ENCODE measurements at regions of chr6 and their contacts with region 1.

Region 1: GRCh38 chr6:84428300-84428907 is 201.0 kb upstream of the CEP162 start:
- DNase-seq: peak; percentile 66
- H3K4me3 Mint-ChIP-seq: no peak overlapping the region
- H3K27ac Mint-ChIP-seq: no peak overlapping the region
- H3K4me1 Mint-ChIP-seq: peaks cover 22% of the 10 kb centered on the region
- H3K27me3 Mint-ChIP-seq: no peaks in the 10 kb centered on the region
- CTCF ChIP-seq: peak; percentile 86

Region 2: GRCh38 chr6:84554074-84554473 is 125.7 kb after region 1 on chr6:
- CTCF ChIA-PET with region 1: no interaction called
- POLR2A ChIA-PET with region 1: no interaction called
- intact Hi-C with region 1: no loop called
- DNase-seq: peak; percentile 60
- H3K4me3 Mint-ChIP-seq: no peak overlapping the region
- H3K27ac Mint-ChIP-seq: no peak overlapping the region
- H3K4me1 Mint-ChIP-seq: peaks cover 9% of the 10 kb centered on the region
- H3K27me3 Mint-ChIP-seq: no peaks in the 10 kb centered on the region
- CTCF ChIP-seq: no peak

Region 3: GRCh38 chr6:84568971-84569370 is 140.6 kb after region 1 on chr6:
- CTCF ChIA-PET with region 1: interaction called, 3 read pairs
- POLR2A ChIA-PET with region 1: no interaction called
- intact Hi-C with region 1: loop called (anchors 2 kb)
- DNase-seq: peak; percentile 35
- H3K4me3 Mint-ChIP-seq: no peak overlapping the region
- H3K27ac Mint-ChIP-seq: no peak overlapping the region
- H3K4me1 Mint-ChIP-seq: no peaks in the 10 kb centered on the region
- H3K27me3 Mint-ChIP-seq: no peaks in the 10 kb centered on the region
- CTCF ChIP-seq: no peak

Region 4: DNA sequence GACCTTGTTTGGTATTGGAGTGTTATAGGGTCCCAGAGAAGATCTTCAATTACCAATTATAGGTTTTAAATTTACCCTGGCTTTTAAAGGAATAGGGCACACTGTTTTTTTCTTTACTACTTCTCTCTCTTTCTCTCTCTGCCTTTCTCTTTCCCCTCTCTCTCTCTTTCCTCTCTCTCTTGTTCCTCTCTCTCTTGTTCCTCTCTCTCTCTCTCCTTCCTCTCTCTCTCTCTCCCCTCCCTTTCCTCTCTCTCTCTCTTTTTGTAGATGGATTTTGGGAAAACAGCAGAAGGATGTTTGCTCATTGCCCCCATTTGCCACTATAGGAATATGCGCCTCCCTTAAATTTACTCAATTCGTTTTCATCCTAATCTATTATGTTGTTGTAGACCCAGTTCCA is 290.7 kb after region 1 on chr6:
- CTCF ChIA-PET with region 1: no interaction called
- POLR2A ChIA-PET with region 1: no interaction called
- intact Hi-C with region 1: loop called (anchors 10 kb)
- DNase-seq: no peak
- H3K4me3 Mint-ChIP-seq: no peak overlapping the region
- H3K27ac Mint-ChIP-seq: no peak overlapping the region
- H3K4me1 Mint-ChIP-seq: peaks cover 11% of the 10 kb centered on the region
- H3K27me3 Mint-ChIP-seq: no peaks in the 10 kb centered on the region
- CTCF ChIP-seq: no peak

Region 5: DNA sequence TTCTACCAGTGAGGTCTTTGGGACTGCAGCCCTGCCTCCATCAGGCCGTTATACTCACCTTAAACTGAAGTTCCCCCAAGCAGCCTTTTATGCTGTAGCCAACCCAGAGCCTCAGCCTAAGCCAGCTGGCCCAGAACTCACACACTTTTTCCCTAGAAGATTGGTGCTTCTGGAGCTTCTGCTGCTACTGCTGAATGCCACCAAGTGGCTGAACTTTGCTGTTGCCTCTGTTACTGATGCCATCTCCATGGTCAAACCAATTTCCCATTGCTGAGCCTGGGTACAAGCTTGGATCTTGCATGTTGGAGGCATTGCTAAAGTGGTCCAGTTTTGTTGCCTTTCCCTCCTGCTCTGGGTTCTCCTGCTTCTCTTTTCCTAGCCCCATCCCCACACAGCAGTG is 351.0 kb after region 1 on chr6:
- CTCF ChIA-PET with region 1: interaction called, 3 read pairs
- POLR2A ChIA-PET with region 1: no interaction called
- intact Hi-C with region 1: loop called (anchors 5 kb)
- DNase-seq: peak; percentile 14
- H3K4me3 Mint-ChIP-seq: no peak overlapping the region
- H3K27ac Mint-ChIP-seq: peak overlapping the region; percentile 18
- H3K4me1 Mint-ChIP-seq: peaks cover 22% of the 10 kb centered on the region
- H3K27me3 Mint-ChIP-seq: no peaks in the 10 kb centered on the region
- CTCF ChIP-seq: peak; percentile 10

Region 6: DNA sequence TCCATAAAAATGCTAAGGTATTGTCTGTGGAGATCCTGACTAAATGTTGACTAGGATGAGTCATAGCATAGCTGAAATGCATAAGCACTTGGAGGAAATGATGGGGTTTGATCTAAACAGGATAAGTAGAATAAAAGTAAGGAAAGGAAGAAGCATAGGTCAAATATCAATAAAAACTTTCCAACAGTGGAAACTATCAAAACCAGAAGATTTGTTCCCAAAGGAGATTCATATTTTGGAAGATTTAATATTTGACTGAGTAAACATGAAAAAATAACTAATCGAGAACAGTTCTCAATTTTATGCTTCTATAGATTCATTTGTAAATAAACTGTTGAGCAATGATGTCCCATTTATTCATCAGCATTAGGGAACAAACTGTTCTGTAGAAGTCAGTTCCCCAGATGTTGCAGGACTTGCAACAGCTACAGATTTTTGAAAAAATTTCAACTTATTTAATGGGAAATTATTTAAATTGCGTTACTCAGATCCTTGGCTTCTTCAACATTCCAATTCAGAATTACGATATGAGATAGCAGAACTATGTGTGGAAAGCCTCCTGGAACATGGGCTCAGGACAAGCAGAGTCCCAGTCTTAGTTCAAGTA is 469.7 kb after region 1 on chr6:
- CTCF ChIA-PET with region 1: no interaction called
- POLR2A ChIA-PET with region 1: no interaction called
- intact Hi-C with region 1: loop called (anchors 10 kb)
- DNase-seq: peak; percentile 83
- H3K4me3 Mint-ChIP-seq: peak overlapping the region; percentile 54
- H3K27ac Mint-ChIP-seq: peak overlapping the region; percentile 98
- H3K4me1 Mint-ChIP-seq: peaks cover 52% of the 10 kb centered on the region
- H3K27me3 Mint-ChIP-seq: no peaks in the 10 kb centered on the region
- CTCF ChIP-seq: no peak

Region 7: GRCh38 chr6:84967389-84967788 is 539.0 kb after region 1 on chr6:
- CTCF ChIA-PET with region 1: interaction called, 15 read pairs
- POLR2A ChIA-PET with region 1: interaction called, 3 read pairs
- intact Hi-C with region 1: loop called (anchors 1 kb)
- DNase-seq: peak; percentile 67
- H3K4me3 Mint-ChIP-seq: no peak overlapping the region
- H3K27ac Mint-ChIP-seq: peak overlapping the region; percentile 75
- H3K4me1 Mint-ChIP-seq: peaks cover 19% of the 10 kb centered on the region
- H3K27me3 Mint-ChIP-seq: no peaks in the 10 kb centered on the region
- CTCF ChIP-seq: peak; percentile 64

Region 8: GRCh38 chr6:85015396-85015990 is 587.1 kb after region 1 on chr6:
- CTCF ChIA-PET with region 1: no interaction called
- POLR2A ChIA-PET with region 1: no interaction called
- intact Hi-C with region 1: loop called (anchors 1 kb)
- DNase-seq: peak; percentile 64
- H3K4me3 Mint-ChIP-seq: no peak overlapping the region
- H3K27ac Mint-ChIP-seq: no peak overlapping the region
- H3K4me1 Mint-ChIP-seq: no peaks in the 10 kb centered on the region
- H3K27me3 Mint-ChIP-seq: no peaks in the 10 kb centered on the region
- CTCF ChIP-seq: peak; percentile 65